ENCODE measurements at regions of chr12 and their contacts with region 1.

Region 1: GRCh38 chr12:117049295-117049694 is 49.9 kb downstream of the TESC start:
- DNase-seq: no peak
- ATAC-seq: no peak
- H3K4me3 ChIP-seq: no peak overlapping the region
- H3K27ac ChIP-seq: no peak overlapping the region
- H3K4me1 ChIP-seq: peaks cover 7% of the 10 kb centered on the region
- H3K27me3 ChIP-seq: peaks cover 20% of the 10 kb centered on the region; the same call in 1 of the 2 replicates
- CTCF ChIP-seq: no peak
- POLR2A ChIP-seq: no peak
- RAD21 ChIP-seq: no peak

Region 2: GRCh38 chr12:116832353-116832752 is 216.9 kb before region 1 on chr12:
- CTCF ChIA-PET with region 1: interaction called, 12 read pairs
- POLR2A ChIA-PET with region 1: no interaction called
- dilution Hi-C with region 1: no loop called
- in situ Hi-C with region 1: no loop called
- intact Hi-C with region 1: no loop called
- DNase-seq: no peak
- ATAC-seq: no peak
- H3K4me3 ChIP-seq: no peak overlapping the region
- H3K27ac ChIP-seq: no peak overlapping the region
- H3K4me1 ChIP-seq: no peaks in the 10 kb centered on the region
- H3K27me3 ChIP-seq: no peaks in the 10 kb centered on the region; the same call in 1 of the 2 replicates
- CTCF ChIP-seq: no peak
- POLR2A ChIP-seq: no peak
- RAD21 ChIP-seq: no peak